ENCODE measurements at regions of chr1 and their contacts with region 1.

Region 1: DNA sequence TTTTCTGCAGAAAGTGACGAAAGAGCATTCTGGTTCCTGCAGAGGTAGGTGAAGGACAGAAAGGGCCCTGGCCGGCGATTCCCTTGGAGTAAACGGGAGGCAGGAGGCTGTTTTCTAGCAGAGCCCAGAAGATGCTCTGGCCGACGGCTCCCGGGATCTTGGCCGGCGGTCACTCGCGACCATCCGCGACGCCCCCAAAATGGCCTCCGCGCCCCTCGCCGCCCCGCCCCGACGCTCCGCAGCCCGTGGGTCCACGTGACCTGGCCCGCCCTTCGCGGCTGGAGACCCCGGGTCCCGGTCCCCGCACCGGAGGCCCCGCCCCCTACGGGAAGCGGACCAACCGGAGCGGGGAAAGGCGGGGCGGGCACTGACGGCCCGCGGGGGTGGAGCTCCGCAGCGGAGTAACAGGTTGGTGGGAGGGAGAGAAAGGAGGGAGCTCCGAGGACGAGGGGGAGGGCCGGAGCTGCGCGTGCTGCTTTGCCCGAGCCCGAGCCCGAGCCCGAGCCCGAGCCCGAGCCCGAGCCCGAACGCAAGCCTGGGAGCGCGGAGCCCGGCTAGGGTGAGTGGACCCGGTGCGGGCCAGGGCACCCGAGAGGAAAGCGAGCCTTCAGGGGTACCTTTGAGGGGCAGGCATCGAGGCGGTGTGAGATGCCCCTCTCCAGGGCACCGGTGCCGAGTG is at the start of gene CGN:
- DNase-seq: peak; percentile 96
- ATAC-seq: peak; percentile 87
- H3K4me3 Mint-ChIP-seq: peak within 1 kb of the TSS; percentile 84
- H3K27ac Mint-ChIP-seq: peak within 1 kb of the TSS; percentile 97
- H3K4me1 Mint-ChIP-seq: peaks cover 46% of the 10 kb centered on the region
- H3K27me3 Mint-ChIP-seq: no peaks in the 10 kb centered on the region
- CTCF ChIP-seq: no peak
- total RNA-seq, gene CGN: 52.4 to 68.7 TPM (median 55.6 TPM) in 3 replicates

Region 2: DNA sequence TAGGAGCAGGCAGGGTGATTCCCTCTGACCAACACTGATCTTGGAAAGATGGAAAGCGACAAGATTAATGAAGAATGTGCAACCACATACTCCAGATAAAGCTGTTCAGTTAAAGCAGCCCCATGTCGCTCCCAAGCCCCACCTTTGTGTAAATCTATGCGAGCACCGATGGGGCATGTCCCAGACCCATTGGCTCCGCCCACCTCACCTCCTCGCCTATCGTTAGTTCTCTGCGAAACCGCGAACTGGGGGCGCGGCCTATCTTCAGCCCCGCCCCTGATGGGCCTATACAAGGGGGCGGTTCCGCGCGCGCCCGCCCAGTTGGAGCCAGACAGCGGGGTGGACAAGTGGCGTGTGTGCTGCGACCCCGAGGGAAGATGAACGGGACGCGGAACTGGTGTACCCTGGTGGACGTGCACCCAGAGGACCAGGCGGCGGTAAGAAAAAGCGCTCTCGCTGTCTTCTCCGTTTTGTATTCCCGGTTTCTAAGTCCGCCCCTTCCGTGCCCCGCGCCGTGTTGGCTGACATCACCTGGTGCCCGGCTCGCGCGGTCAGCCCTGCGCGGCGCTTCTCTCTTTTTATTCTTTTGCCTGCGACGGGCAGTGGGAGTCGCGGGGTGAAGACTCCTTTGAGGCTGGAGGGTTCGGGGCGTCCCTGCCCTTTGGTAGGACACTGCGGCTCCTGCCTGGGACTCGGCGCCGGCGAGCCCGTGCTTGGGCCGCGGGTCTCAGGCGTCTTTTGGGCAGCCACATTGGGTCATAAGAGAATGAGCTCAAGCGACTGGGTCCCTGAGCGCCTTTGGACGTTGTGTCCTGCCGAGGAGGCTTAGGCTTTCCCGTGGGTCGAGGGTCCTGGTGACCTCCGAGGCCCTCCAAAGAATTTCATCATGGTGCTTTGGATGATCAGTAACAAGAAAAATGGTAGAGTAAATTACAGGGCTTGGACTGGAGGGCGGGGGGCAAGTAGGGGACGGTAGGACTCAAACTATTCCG is 29.2 kb after region 1 on chr1 and contains the start of gene TUFT1:
- CTCF ChIA-PET with region 1: interaction called, 9 read pairs
- POLR2A ChIA-PET with region 1: interaction called, 56 read pairs
- DNase-seq: peak; percentile 99
- ATAC-seq: peak; percentile 93
- H3K4me3 Mint-ChIP-seq: peak within 1 kb of the TSS; percentile 96
- H3K27ac Mint-ChIP-seq: peak within 1 kb of the TSS; percentile 99
- H3K4me1 Mint-ChIP-seq: peaks cover 16% of the 10 kb centered on the region
- H3K27me3 Mint-ChIP-seq: peaks cover 3% of the 10 kb centered on the region; the same call in 1 of the 2 replicates
- CTCF ChIP-seq: no peak
- total RNA-seq, gene TUFT1: 7.7 to 8.6 TPM (median 7.9 TPM) in 3 replicates

Region 3: GRCh38 chr1:151565502-151566189 is 54.5 kb after region 1 on chr1:
- CTCF ChIA-PET with region 1: no interaction called
- POLR2A ChIA-PET with region 1: no interaction called
- DNase-seq: no peak
- ATAC-seq: no peak
- H3K4me3 Mint-ChIP-seq: no peak overlapping the region
- H3K27ac Mint-ChIP-seq: peak overlapping the region; percentile 34; the same call in 1 of the 2 replicates
- H3K4me1 Mint-ChIP-seq: peaks cover 11% of the 10 kb centered on the region
- H3K27me3 Mint-ChIP-seq: no peaks in the 10 kb centered on the region
- CTCF ChIP-seq: no peak